A673 (cell line): ENCODE measurements at regions of chr1 and their contacts with region 1.

Region 1: GRCh38 chr1:51843948-51844347 is 34.6 kb downstream of the NRDC start:
- DNase-seq: peak; percentile 84
- H3K4me3 ChIP-seq: no peak overlapping the region
- H3K27ac ChIP-seq: peak overlapping the region; percentile 99
- H3K4me1 ChIP-seq: peaks cover 63% of the 10 kb centered on the region
- H3K27me3 ChIP-seq: no peaks in the 10 kb centered on the region
- CTCF ChIP-seq: no peak

Region 2: GRCh38 chr1:51616901-51617708 is 226.8 kb before region 1 on chr1 and contains the start of gene OSBPL9:
- CTCF ChIA-PET with region 1: no interaction called
- POLR2A ChIA-PET with region 1: interaction called, 14 read pairs
- intact Hi-C with region 1: no loop called
- DNase-seq: peak; percentile 95
- H3K4me3 ChIP-seq: peak within 1 kb of the TSS; percentile 85
- H3K27ac ChIP-seq: peak within 1 kb of the TSS; percentile 91
- H3K4me1 ChIP-seq: peaks cover 27% of the 10 kb centered on the region
- H3K27me3 ChIP-seq: no peaks in the 10 kb centered on the region
- CTCF ChIP-seq: no peak
- total RNA-seq, gene OSBPL9: 62.4 and 73.7 TPM in 2 replicates

Region 3: GRCh38 chr1:51878616-51879336 is 34.8 kb after region 1 on chr1 and contains the start of gene NRDC:
- CTCF ChIA-PET with region 1: no interaction called
- POLR2A ChIA-PET with region 1: interaction called, 4 read pairs
- intact Hi-C with region 1: loop called (anchors 2 kb)
- DNase-seq: peak; percentile 100
- H3K4me3 ChIP-seq: peak within 1 kb of the TSS; percentile 71
- H3K27ac ChIP-seq: peak within 1 kb of the TSS; percentile 98
- H3K4me1 ChIP-seq: no peaks in the 10 kb centered on the region
- H3K27me3 ChIP-seq: no peaks in the 10 kb centered on the region
- CTCF ChIP-seq: no peak
- total RNA-seq, gene NRDC: 1,009 and 1,043 TPM in 2 replicates

Region 4: DNA sequence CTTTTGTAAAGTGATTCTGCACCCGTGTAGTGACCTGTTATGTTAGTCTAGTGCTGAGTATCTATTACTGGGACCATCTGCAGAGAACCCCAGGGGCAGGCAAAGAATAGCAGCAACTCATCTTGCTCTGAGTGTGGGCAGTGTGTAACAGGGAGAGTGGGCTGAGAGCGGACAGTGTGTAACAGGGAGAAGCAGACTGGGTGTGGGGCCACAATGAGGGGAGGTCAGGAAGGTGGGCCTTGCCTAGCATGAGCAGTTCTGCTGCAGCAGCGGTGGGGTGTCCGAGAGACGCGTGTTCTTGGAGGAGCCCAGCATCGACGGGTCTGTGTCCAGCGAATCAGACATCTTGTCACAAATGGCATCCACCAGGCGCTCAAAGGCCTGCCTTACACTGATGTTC is 75.7 kb after region 1 on chr1:
- CTCF ChIA-PET with region 1: interaction called, 4 read pairs
- POLR2A ChIA-PET with region 1: no interaction called
- intact Hi-C with region 1: loop called (anchors 2 kb)
- DNase-seq: peak; percentile 41
- H3K4me3 ChIP-seq: no peak overlapping the region
- H3K27ac ChIP-seq: peak overlapping the region; percentile 86
- H3K4me1 ChIP-seq: peaks cover 48% of the 10 kb centered on the region
- H3K27me3 ChIP-seq: no peaks in the 10 kb centered on the region
- CTCF ChIP-seq: no peak

Region 5: DNA sequence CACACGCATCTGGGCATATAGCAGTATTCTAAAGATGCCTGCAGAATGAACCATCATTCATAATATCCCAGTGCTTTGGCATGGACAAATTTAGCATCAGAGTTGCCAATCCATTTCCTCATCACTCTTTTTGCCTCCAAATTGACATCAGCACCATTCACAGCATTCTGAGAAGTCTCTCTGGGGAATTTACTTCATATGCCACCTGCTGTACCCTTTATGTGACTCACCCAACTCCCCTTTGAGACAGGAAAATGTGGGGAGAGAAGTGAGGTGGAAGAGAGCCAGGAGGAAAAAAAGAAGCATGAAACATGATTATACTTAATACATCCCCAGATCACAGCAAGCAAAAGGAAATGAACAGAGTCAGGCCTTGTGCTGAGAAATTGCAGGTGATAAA is 109.1 kb after region 1 on chr1:
- CTCF ChIA-PET with region 1: no interaction called
- POLR2A ChIA-PET with region 1: interaction called, 3 read pairs
- intact Hi-C with region 1: loop called (anchors 2 kb)
- DNase-seq: peak; percentile 99
- H3K4me3 ChIP-seq: no peak overlapping the region
- H3K27ac ChIP-seq: peak overlapping the region; percentile 75
- H3K4me1 ChIP-seq: peaks cover 88% of the 10 kb centered on the region
- H3K27me3 ChIP-seq: no peaks in the 10 kb centered on the region
- CTCF ChIP-seq: no peak

Region 6: GRCh38 chr1:51969038-51969705 is 125.2 kb after region 1 on chr1:
- CTCF ChIA-PET with region 1: no interaction called
- POLR2A ChIA-PET with region 1: interaction called, 10 read pairs
- intact Hi-C with region 1: no loop called
- DNase-seq: no peak
- H3K4me3 ChIP-seq: no peak overlapping the region
- H3K27ac ChIP-seq: no peak overlapping the region
- H3K4me1 ChIP-seq: peaks cover 28% of the 10 kb centered on the region
- H3K27me3 ChIP-seq: no peaks in the 10 kb centered on the region
- CTCF ChIP-seq: no peak

Region 7: GRCh38 chr1:52056163-52056936 is 212.4 kb after region 1 on chr1 and contains the start of gene BTF3L4:
- CTCF ChIA-PET with region 1: no interaction called
- POLR2A ChIA-PET with region 1: interaction called, 10 read pairs
- intact Hi-C with region 1: no loop called
- DNase-seq: peak; percentile 98
- H3K4me3 ChIP-seq: peak within 1 kb of the TSS; percentile 80
- H3K27ac ChIP-seq: peak within 1 kb of the TSS; percentile 92
- H3K4me1 ChIP-seq: peaks cover 30% of the 10 kb centered on the region
- H3K27me3 ChIP-seq: no peaks in the 10 kb centered on the region
- CTCF ChIP-seq: no peak
- total RNA-seq, gene BTF3L4: 84.4 and 87.0 TPM in 2 replicates